ENCODE measurements at regions of chr1 and their contacts with region 1.

Region 1: GRCh38 chr1:179954493-179955297 is at the start of gene CEP350:
- DNase-seq: peak; percentile 97 to 99 (median 99)
- H3K4me3 ChIP-seq: peak within 1 kb of the TSS; percentile 68 to 76
- H3K4me3 Mint-ChIP-seq: peak within 1 kb of the TSS; percentile 86 to 99 (median 91)
- H3K27ac ChIP-seq: peak within 1 kb of the TSS; percentile 90
- H3K27ac Mint-ChIP-seq: peak within 1 kb of the TSS; percentile 86 to 98 (median 95)
- H3K4me1 ChIP-seq: peaks cover 50% of the 10 kb centered on the region
- H3K4me1 Mint-ChIP-seq: peaks cover 36 to 70% (median 48%) of the 10 kb centered on the region in 4 donors
- H3K27me3 ChIP-seq: no peaks in the 10 kb centered on the region
- H3K27me3 Mint-ChIP-seq: no peaks in the 10 kb centered on the region
- total RNA-seq, gene CEP350: 86.2 to 99.4 TPM

Region 2: DNA sequence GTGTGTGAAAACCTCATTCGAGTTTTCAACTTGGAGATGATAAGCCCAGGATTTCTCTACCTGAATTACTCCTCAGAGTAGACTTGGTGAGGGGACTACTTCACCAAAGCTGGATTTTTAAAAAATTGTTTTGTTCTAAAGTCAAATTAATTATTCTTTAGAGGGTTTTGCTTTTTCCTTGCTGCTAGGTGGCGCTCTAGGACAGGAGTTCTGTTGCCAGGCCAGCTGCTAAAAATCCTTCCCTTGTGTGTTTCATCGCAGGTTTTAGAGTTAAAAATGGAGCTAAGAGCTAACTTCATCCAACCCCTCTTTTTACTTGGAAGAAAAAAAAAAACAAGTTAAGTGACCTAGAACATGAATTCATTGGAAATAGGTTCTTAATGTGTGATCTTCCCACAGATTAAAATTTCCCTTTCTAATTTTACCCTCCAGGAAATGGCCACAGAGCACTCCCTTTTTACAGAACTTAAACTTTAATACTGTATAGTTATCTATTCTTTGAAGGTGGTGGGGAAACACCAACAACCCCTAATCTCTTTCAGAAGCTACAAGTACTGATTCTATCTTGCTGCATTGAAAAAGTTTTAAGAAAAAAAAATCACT is 248.3 kb before region 1 on chr1:
- CTCF ChIA-PET with region 1: no interaction called
- POLR2A ChIA-PET with region 1: no interaction called
- intact Hi-C with region 1: loop called (anchors 2 kb)
- DNase-seq: peak; percentile 56 to 66 (median 59)
- H3K4me3 ChIP-seq: no peak overlapping the region
- H3K4me3 Mint-ChIP-seq: no peak overlapping the region
- H3K27ac ChIP-seq: no peak overlapping the region
- H3K27ac Mint-ChIP-seq: peak overlapping the region; percentile 44 to 85 (median 76)
- H3K4me1 ChIP-seq: peaks cover 18% of the 10 kb centered on the region
- H3K4me1 Mint-ChIP-seq: peaks cover 5 to 22% (median 17%) of the 10 kb centered on the region in 4 donors
- H3K27me3 ChIP-seq: no peaks in the 10 kb centered on the region
- H3K27me3 Mint-ChIP-seq: peaks cover 0 to 5% of the 10 kb centered on the region in 2 donors

Region 3: DNA sequence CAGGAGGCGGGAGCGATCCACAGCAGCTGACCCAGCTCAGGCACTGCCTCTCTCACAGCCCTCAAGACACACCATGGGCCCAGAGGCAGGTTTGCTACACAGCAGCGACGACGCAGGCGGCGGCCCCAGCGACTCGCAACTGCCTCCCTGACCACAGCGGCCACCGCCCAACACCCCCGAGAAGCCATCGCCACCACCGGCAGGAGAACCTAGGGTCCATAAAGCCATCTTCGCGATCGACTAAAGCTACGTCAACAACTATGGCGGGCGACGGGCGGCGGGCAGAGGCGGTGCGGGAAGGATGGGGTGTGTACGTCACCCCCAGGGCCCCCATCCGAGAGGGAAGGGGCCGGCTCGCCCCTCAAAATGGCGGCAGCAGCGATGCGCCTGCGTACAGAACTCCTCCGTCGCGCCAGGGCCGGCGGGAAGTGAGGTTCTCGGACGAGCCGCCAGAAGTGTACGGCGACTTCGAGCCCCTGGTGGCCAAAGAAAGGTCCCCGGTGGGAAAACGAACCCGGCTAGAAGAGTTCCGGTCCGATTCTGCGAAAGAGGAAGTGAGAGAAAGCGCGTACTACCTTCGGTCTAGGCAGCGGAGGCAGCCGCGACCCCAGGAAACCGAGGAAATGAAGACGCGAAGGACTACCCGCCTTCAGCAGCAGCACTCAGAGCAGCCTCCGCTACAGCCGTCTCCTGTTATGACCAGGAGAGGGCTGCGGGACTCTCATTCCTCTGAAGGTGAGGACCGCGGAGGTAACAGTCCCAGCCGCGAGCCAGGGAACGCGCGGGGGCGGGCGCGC is 72.3 kb before region 1 on chr1 and contains the start of gene TOR1AIP1:
- CTCF ChIA-PET with region 1: interaction called, 9 read pairs
- POLR2A ChIA-PET with region 1: interaction called, 108 read pairs
- intact Hi-C with region 1: loop called (anchors 1 kb)
- DNase-seq: peak; percentile 98 to 99 (median 98)
- H3K4me3 ChIP-seq: peak within 1 kb of the TSS; percentile 80 to 94
- H3K4me3 Mint-ChIP-seq: peak within 1 kb of the TSS; percentile 94 to 99 (median 96)
- H3K27ac ChIP-seq: peak within 1 kb of the TSS; percentile 99
- H3K27ac Mint-ChIP-seq: peak within 1 kb of the TSS; percentile 99 to 100 (median 100)
- H3K4me1 ChIP-seq: peaks cover 53% of the 10 kb centered on the region
- H3K4me1 Mint-ChIP-seq: peaks cover 31 to 77% (median 53%) of the 10 kb centered on the region in 4 donors
- H3K27me3 ChIP-seq: no peaks in the 10 kb centered on the region
- H3K27me3 Mint-ChIP-seq: no peaks in the 10 kb centered on the region
- total RNA-seq, gene TOR1AIP1: 53.8 to 61.0 TPM

Region 4: DNA sequence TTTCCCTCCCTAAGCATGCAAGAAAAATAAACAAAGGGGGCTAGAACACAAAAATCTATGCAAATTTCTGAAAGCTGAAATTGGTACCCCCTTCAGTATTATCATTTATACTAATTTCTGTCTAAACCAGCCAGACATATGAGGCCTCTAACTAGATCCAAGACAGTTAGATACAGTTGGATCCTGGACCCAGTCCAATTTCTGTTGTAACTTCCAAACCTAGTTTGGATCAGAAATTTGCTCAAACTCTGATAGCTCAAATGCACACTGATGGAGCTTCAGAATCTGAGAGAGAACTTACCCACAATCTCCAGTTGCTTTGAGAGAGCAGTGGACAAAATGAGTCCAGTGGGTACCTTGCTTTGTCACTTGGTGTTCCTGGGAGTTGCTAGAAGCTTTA is 11.9 kb after region 1 on chr1:
- CTCF ChIA-PET with region 1: no interaction called
- POLR2A ChIA-PET with region 1: interaction called, 12 read pairs
- intact Hi-C with region 1: no loop called
- DNase-seq: no peak
- H3K4me3 ChIP-seq: no peak overlapping the region
- H3K4me3 Mint-ChIP-seq: no peak overlapping the region
- H3K27ac ChIP-seq: no peak overlapping the region
- H3K27ac Mint-ChIP-seq: no peak overlapping the region
- H3K4me1 ChIP-seq: peaks cover 51% of the 10 kb centered on the region
- H3K4me1 Mint-ChIP-seq: peaks cover 43 to 65% (median 56%) of the 10 kb centered on the region in 4 donors
- H3K27me3 ChIP-seq: no peaks in the 10 kb centered on the region
- H3K27me3 Mint-ChIP-seq: no peaks in the 10 kb centered on the region

Region 5: DNA sequence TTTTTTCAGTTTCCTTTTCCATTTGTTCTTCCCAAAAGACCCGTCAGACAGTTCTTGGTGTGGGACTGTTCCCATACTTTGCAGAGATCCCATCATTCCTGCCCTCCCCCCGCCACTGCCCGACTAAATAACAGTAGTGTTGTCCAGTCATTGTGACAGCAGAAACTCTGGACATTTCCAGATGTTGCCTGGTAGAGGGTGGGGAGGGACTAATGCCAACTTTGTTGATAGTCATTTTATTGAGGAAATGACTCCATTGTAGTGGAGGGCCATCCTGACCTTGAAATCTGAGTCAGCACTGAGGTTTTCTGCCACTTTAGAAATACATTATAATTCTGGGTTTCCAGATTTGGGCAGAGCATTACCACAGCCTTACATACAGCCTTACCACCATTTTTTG is 85.3 kb after region 1 on chr1:
- CTCF ChIA-PET with region 1: no interaction called
- POLR2A ChIA-PET with region 1: no interaction called
- intact Hi-C with region 1: no loop called
- DNase-seq: no peak
- H3K4me3 ChIP-seq: no peak overlapping the region
- H3K4me3 Mint-ChIP-seq: no peak overlapping the region
- H3K27ac ChIP-seq: no peak overlapping the region
- H3K27ac Mint-ChIP-seq: no peak overlapping the region
- H3K4me1 ChIP-seq: no peaks in the 10 kb centered on the region
- H3K4me1 Mint-ChIP-seq: no peaks in the 10 kb centered on the region
- H3K27me3 ChIP-seq: no peaks in the 10 kb centered on the region
- H3K27me3 Mint-ChIP-seq: no peaks in the 10 kb centered on the region

Region 6: DNA sequence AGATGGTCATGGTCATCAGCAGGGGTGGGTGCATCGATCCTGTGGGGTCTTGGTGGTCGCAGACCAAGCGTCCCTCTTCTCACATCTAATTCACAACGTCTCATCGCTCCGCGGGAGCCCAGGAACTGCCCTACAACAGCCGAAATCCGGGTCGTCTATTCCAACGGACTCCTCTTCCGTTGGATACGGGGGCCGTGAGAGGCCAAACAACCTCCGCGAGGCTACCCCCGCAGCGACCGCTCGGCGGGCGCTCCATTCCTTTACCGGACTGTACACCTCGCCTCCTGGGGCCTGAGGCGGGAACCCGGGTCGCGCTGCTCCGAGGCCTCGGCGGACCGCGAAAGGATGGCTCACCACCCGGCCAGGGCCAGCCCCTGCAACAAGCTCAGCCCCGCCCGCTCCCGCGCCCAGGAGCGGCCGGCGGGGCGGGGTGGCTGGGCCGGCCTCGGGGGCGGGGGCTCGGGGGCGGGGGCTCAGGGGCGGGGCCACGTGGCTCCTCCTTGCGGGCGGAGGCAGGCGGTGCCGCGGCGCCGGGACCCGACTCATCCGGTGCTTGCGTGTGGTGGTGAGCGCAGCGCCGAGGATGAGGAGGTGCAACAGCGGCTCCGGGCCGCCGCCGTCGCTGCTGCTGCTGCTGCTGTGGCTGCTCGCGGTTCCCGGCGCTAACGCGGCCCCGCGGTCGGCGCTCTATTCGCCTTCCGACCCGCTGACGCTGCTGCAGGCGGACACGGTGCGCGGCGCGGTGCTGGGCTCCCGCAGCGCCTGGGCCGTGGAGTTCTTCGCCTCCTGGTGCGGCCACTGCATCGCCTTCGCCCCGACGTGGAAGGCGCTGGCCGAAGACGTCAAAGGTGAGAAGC is 199.9 kb after region 1 on chr1 and contains the start of gene QSOX1:
- CTCF ChIA-PET with region 1: no interaction called
- POLR2A ChIA-PET with region 1: interaction called, 19 read pairs
- intact Hi-C with region 1: loop called (anchors 1 kb)
- DNase-seq: peak; percentile 88 to 91 (median 89)
- H3K4me3 ChIP-seq: peak within 1 kb of the TSS; percentile 87 to 94
- H3K4me3 Mint-ChIP-seq: peak within 1 kb of the TSS; percentile 89 to 94 (median 92)
- H3K27ac ChIP-seq: peak within 1 kb of the TSS; percentile 68
- H3K27ac Mint-ChIP-seq: peak within 1 kb of the TSS; percentile 85 to 94 (median 92)
- H3K4me1 ChIP-seq: peaks cover 27% of the 10 kb centered on the region
- H3K4me1 Mint-ChIP-seq: peaks cover 14 to 52% (median 34%) of the 10 kb centered on the region in 4 donors
- H3K27me3 ChIP-seq: no peaks in the 10 kb centered on the region
- H3K27me3 Mint-ChIP-seq: no peaks in the 10 kb centered on the region
- total RNA-seq, gene QSOX1: 19.1 to 25.1 TPM

Region 7: DNA sequence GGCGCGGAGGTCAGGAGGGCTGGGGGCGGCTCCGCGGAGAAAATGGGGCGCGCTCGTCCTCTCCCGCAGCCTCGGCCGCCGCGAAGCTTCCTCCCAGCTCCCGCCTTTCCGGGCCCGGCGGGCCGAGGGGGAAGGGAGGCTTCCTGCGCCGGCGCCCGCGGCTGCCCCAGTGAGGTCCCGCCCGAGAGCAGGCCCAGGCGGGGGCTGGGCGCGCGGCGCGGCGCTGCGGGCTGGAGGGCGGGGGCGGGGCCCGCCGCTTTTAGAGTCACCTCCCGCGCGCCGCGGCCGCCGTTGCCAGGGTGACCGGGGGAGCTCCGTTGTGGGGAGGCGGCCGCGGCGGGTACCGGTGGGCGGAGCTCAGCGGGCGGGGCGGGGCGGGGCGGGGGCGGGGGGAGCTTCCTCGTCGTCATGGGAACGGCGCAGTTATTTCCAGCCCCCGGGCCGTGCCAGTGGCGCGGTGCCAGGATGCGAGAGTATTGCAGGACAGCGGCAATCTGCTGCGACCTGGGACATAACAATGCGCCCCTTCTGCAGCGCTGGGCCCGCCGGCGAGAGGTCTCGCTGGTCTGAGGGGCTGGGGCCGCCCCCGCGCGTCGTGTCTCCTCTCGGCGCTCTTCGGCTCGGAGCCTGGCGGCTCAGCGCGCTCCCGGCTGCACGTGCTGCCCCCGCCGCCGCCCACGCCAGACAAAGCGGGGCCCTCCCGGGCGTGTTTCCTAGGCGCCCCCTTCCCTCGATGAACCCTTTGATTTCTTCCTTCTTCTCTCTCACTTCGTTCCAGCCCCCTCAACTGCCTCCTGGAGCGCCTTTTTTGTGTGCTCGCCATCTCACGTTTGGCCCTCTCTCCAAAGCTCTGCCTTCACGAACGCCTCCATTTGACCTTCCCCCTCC is 1150.7 kb after region 1 on chr1:
- CTCF ChIA-PET with region 1: no interaction called
- POLR2A ChIA-PET with region 1: no interaction called
- intact Hi-C with region 1: loop called (anchors 10 kb)
- DNase-seq: peak; percentile 90 to 94 (median 91)
- H3K4me3 ChIP-seq: peak overlapping the region in 1 of 2 donors; percentile 76
- H3K4me3 Mint-ChIP-seq: peak overlapping the region; percentile 87 to 97 (median 90)
- H3K27ac ChIP-seq: peak overlapping the region; percentile 79
- H3K27ac Mint-ChIP-seq: peak overlapping the region; percentile 92 to 98 (median 96)
- H3K4me1 ChIP-seq: peaks cover 56% of the 10 kb centered on the region
- H3K4me1 Mint-ChIP-seq: peaks cover 33 to 71% (median 50%) of the 10 kb centered on the region in 4 donors
- H3K27me3 ChIP-seq: no peaks in the 10 kb centered on the region
- H3K27me3 Mint-ChIP-seq: no peaks in the 10 kb centered on the region